ENCODE measurements at regions of chr9 and their contacts with region 1.

Region 1: GRCh38 chr9:120842690-120843499 is at the start of gene PSMD5:
- DNase-seq: peak; percentile 94
- ATAC-seq: peak; percentile 96
- H3K4me3 Mint-ChIP-seq: peak within 1 kb of the TSS; percentile 98
- H3K27ac Mint-ChIP-seq: peak within 1 kb of the TSS; percentile 97
- H3K4me1 Mint-ChIP-seq: peaks cover 64% of the 10 kb centered on the region
- H3K27me3 Mint-ChIP-seq: no peaks in the 10 kb centered on the region
- total RNA-seq, gene PSMD5: 42.6 to 57.4 TPM

Region 2: DNA sequence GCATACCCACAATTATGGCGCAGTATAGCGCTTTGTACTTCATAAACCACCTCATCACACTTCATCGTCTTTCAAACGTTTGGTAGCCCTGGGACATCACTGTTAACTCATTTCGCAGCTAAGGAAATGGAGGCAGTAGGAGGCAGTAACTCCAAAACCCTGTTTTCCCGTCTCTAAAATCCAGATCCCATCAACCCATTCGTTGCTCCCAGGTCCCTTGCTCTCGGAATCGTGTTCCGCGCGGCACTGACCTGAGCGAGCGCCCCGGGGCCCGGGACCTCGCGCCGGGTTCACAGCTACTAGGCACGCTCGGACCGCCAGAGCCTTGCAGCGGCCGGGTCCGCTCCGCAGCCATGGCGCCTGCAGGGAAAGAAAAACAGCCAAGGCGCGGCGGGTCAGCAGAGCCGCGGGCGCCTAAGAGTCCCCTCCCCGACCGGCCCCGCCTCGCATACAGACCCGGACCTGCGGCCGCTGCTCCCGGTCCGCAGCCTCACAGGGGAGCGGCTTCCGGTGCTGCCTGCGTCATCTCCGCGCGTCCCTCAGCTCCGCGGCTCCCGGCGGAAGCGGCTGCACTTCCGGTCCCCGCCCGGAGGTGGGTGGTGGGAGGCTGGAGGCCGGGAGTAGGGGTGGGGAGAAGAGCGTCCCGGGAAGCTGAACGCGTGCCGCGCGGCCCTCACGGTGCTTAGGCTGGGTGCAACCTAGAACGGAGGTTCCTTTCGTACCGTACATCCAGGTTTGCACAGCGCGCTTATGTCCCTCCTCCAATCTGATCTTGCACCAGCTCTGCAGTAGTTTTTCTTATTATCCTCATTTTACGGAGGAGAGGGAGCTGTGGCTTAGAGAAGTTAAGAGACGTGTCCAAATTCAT is 49.8 kb before region 1 on chr9 and contains the start of gene FBXW2:
- POLR2A ChIA-PET with region 1: interaction called, 14 read pairs
- DNase-seq: peak; percentile 92
- ATAC-seq: peak; percentile 90
- H3K4me3 Mint-ChIP-seq: peak within 1 kb of the TSS; percentile 92
- H3K27ac Mint-ChIP-seq: peak within 1 kb of the TSS; percentile 96
- H3K4me1 Mint-ChIP-seq: peaks cover 40% of the 10 kb centered on the region
- H3K27me3 Mint-ChIP-seq: no peaks in the 10 kb centered on the region
- total RNA-seq, gene FBXW2: 80.5 to 87.8 TPM

Region 3: DNA sequence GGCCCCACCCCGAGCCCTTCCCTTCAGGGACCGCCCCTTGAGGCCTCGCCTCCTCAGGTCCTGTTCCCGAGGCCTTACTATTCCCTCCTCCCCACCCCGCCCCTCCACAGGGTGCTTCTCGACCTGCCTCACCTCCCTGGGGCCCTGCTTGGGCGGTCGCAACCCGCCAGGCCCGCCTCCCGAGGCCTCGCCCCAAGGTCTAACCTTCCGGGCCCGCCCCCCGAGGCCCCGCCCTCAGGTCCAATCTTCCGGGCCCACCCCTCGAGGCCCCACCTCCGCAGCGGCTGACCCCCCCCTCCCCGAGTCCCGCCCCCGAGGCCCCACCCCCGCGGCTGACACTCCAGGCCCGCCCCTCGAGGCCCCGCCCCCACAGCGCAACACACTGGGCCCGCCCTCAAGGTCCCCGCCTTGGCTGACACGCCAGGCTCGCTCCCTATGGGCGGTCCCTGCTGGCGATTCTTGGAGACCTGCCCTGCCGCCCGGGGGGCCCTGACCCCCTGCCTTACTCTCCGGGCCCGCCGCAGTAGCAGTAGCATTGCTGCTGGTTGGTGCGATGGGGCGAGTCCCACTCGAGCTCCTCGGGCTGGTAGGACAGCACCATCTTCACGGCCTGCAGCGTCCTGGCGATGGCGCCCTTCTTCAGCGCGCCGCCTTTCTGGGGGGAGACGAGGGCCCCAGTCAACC is 25.9 kb after region 1 on chr9:
- POLR2A ChIA-PET with region 1: interaction called, 11 read pairs
- DNase-seq: peak; percentile 98
- ATAC-seq: peak; percentile 92
- H3K4me3 Mint-ChIP-seq: peak overlapping the region; percentile 92
- H3K27ac Mint-ChIP-seq: peak overlapping the region; percentile 99
- H3K4me1 Mint-ChIP-seq: peaks cover 50% of the 10 kb centered on the region
- H3K27me3 Mint-ChIP-seq: no peaks in the 10 kb centered on the region

Region 4: DNA sequence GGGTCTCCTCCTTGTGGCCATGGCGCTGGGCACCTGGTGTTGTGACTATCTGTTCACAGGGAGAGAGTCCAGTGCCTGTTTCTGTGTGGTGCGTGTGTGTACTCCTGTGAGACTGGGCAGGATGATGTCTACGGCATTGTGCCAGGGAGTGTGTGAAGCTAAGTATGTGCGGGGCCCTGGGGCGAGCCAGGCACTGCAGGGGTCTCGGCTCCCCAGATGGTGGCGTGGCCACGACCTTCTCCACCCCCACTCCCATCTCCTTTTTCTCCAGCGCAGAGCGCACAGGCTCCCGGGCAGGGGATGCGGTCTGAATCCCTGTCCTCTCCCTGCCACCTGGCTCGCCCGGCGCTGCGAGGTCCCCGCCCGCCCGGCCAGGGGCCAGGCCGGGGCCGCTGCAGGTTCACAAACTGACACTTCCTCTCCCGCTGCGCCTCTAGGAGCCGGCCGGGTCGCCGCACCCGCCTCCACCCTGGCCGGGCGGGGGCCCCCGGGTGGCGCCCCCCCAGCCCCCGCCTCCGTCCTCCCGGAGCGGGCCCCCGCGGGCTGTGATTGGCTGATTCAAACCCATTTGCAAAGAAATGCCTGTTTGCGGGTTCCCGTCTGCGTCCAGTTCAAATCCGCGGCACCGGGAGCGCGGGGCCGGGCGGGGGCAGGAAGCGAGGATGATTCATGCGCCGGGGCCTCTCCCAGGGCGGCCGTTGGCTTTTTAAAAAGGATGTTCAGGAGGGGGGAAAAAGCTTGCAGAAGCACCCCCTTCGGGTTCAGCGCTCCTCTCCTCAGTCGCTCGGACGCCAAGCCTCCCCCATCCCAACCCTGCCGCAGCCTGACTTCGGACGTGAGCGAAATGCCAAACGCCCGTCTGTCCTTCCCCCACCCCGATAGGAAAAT is 33.3 kb after region 1 on chr9:
- POLR2A ChIA-PET with region 1: interaction called, 12 read pairs
- DNase-seq: peak; percentile 91
- ATAC-seq: peak; percentile 58
- H3K4me3 Mint-ChIP-seq: peak overlapping the region; percentile 91
- H3K27ac Mint-ChIP-seq: peak overlapping the region; percentile 89
- H3K4me1 Mint-ChIP-seq: peaks cover 72% of the 10 kb centered on the region
- H3K27me3 Mint-ChIP-seq: no peaks in the 10 kb centered on the region

Measured in activated naive CD8-positive, alpha-beta T cell treated with anti-CD3 and anti-CD28 coated beads, Interleukin-2, amount 10 ng/mL, durations not matched to agents 7 days and 5 days (primary cell).